ENCODE measurements at regions of chr19 and their contacts with region 1.

Region 1: GRCh38 chr19:3984908-3985642 is at the start of gene EEF2:
- DNase-seq: peak; percentile 89 to 96 (median 93)
- ATAC-seq: peak; percentile 72
- H3K4me3 ChIP-seq: peak within 1 kb of the TSS; percentile 98
- H3K4me3 Mint-ChIP-seq: peak within 1 kb of the TSS; percentile 91 to 99 (median 98)
- H3K27ac ChIP-seq: peak within 1 kb of the TSS; percentile 87
- H3K27ac Mint-ChIP-seq: peak within 1 kb of the TSS; percentile 93 to 99 (median 96)
- H3K4me1 ChIP-seq: peaks cover 37 to 43% of the 10 kb centered on the region in 2 donors
- H3K4me1 Mint-ChIP-seq: peaks cover 30 to 57% (median 48%) of the 10 kb centered on the region in 7 donors
- H3K27me3 ChIP-seq: no peaks in the 10 kb centered on the region
- H3K27me3 Mint-ChIP-seq: no peaks in the 10 kb centered on the region
- total RNA-seq, gene EEF2: 1,791 to 2,674 (median 2,346) TPM

Region 2: GRCh38 chr19:3035542-3036118 is 949.4 kb before region 1 on chr19:
- CTCF ChIA-PET with region 1: no interaction called
- POLR2A ChIA-PET with region 1: interaction called, 3 read pairs
- intact Hi-C with region 1: loop called in 1 of 2 experiments (anchors 5 kb)
- DNase-seq: peak; percentile 77 to 97 (median 95)
- ATAC-seq: peak; percentile 95
- H3K4me3 ChIP-seq: peak overlapping the region; percentile 95
- H3K4me3 Mint-ChIP-seq: peak overlapping the region; percentile 88 to 97 (median 94)
- H3K27ac ChIP-seq: peak overlapping the region; percentile 76
- H3K27ac Mint-ChIP-seq: peak overlapping the region; percentile 92 to 99 (median 98)
- H3K4me1 ChIP-seq: peaks cover 11 to 16% of the 10 kb centered on the region in 2 donors
- H3K4me1 Mint-ChIP-seq: peaks cover 21 to 44% (median 31%) of the 10 kb centered on the region in 7 donors
- H3K27me3 ChIP-seq: no peaks in the 10 kb centered on the region
- H3K27me3 Mint-ChIP-seq: peaks cover 0 to 41% (median 0%) of the 10 kb centered on the region in 5 donors

Region 3: DNA sequence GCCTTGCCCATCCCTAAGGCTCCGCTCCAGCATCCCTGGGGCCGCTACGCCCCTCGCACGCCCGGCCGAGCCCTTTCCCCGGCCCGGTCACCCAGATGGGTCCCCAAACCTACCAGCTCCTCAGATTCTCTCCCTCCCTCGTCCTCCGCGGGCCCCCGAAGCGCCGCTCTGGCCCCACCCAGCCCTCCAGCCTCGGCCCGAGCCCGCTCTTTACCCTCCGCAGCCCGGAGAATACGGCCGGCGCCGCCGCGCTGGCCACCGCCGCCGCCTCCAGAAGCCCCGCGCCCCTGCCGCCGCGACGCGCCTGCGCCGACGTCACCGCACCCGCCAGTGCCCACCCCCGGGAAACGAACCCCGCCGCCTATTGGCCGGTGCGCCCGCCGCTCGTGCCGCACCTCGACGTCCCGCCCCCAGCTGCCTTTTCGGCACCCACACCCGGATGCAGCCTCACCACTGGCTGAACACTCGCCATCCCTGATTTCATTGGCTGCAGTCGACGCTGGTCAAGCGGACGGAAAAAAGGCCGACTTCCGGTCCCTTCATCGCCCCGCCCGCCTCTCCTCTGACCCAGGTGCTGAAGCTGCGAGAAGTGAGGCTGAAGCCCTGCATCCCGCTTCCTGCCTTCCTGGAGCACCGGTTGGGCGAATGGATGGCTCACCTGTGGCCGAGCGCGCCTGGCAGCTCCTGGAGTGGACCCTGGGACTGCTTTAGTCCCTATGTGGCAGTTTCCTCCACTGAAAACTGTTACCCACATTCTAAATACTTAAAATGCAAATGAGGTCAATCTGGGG is 14.1 kb before region 1 on chr19 and contains the start of gene DAPK3:
- CTCF ChIA-PET with region 1: interaction called, 6 read pairs
- POLR2A ChIA-PET with region 1: interaction called, 44 read pairs
- intact Hi-C with region 1: loop called (anchors 1 kb)
- DNase-seq: peak; percentile 75 to 97 (median 86)
- ATAC-seq: peak; percentile 97
- H3K4me3 ChIP-seq: peak within 1 kb of the TSS; percentile 90
- H3K4me3 Mint-ChIP-seq: peak within 1 kb of the TSS; percentile 64 to 98 (median 90)
- H3K27ac ChIP-seq: peak within 1 kb of the TSS; percentile 90
- H3K27ac Mint-ChIP-seq: peak within 1 kb of the TSS; percentile 44 to 89 (median 83)
- H3K4me1 ChIP-seq: peaks cover 13 to 16% of the 10 kb centered on the region in 2 donors
- H3K4me1 Mint-ChIP-seq: peaks cover 13 to 34% (median 29%) of the 10 kb centered on the region in 7 donors
- H3K27me3 ChIP-seq: no peaks in the 10 kb centered on the region
- H3K27me3 Mint-ChIP-seq: no peaks in the 10 kb centered on the region
- total RNA-seq, gene DAPK3: 24.7 to 40.3 (median 33.9) TPM

Region 4: DNA sequence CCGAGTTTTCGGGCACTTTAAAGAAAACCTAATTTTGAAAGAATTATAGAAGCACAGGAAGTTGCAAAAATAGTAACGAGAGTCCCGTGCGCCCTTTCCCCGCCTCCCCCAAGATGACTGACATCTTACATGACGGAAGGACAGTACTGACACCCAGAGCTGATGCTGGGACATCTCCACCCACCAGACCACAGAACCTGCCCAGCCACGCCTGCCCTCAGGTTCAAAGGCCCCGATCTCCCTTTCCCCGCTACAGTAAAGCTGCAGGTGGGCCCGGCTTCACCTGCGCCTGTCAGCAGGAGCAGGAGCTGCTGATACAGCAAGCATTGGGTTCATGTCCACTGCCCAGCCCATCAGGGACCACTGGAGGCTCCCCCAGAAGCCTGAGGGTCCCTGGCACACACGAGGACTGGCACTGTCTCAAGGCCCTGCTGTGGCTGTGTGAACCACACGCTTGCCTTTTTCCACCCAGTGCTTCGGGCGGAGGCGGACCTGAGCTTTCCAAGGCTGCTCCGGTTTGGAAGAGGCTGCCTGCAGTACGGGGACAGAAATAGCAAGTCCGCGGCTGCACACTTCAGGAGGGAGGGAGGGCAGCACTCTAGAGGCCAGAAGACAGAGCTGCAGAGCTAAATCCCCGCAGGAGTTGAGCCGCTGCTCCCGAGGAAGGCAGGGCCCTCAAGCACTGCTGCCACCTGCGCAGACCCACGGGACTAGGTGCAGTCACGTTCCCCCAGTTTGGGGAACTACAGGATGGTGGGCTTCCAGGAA is 130.2 kb after region 1 on chr19:
- CTCF ChIA-PET with region 1: interaction called, 4 read pairs
- POLR2A ChIA-PET with region 1: interaction called, 3 read pairs
- intact Hi-C with region 1: loop called in 1 of 2 experiments (anchors 2 kb)
- DNase-seq: peak in 8 of 9 donors; percentile 46 to 78 (median 66)
- ATAC-seq: peak; percentile 99
- H3K4me3 ChIP-seq: no peak overlapping the region
- H3K4me3 Mint-ChIP-seq: peak overlapping the region; percentile 52 to 81 (median 72)
- H3K27ac ChIP-seq: peak overlapping the region; percentile 57
- H3K27ac Mint-ChIP-seq: peak overlapping the region; percentile 64 to 93 (median 83)
- H3K4me1 ChIP-seq: peaks cover 17 to 24% of the 10 kb centered on the region in 2 donors
- H3K4me1 Mint-ChIP-seq: peaks cover 14 to 60% (median 33%) of the 10 kb centered on the region in 7 donors
- H3K27me3 ChIP-seq: no peaks in the 10 kb centered on the region
- H3K27me3 Mint-ChIP-seq: no peaks in the 10 kb centered on the region

Region 5: GRCh38 chr19:4182084-4182810 is 197.2 kb after region 1 on chr19 and contains the starts of genes ANKRD24 and SIRT6:
- CTCF ChIA-PET with region 1: interaction called, 3 read pairs
- POLR2A ChIA-PET with region 1: no interaction called
- intact Hi-C with region 1: loop called (anchors 1 to 2 kb)
- DNase-seq: peak; percentile 91 to 97 (median 96)
- ATAC-seq: peak; percentile 90
- H3K4me3 ChIP-seq: peak within 1 kb of the TSS; percentile 90
- H3K4me3 Mint-ChIP-seq: peak within 1 kb of the TSS; percentile 92 to 99 (median 96)
- H3K27ac ChIP-seq: peak within 1 kb of the TSS; percentile 86
- H3K27ac Mint-ChIP-seq: peak within 1 kb of the TSS; percentile 92 to 98 (median 95)
- H3K4me1 ChIP-seq: peaks cover 14 to 15% of the 10 kb centered on the region in 2 donors
- H3K4me1 Mint-ChIP-seq: peaks cover 25 to 44% (median 39%) of the 10 kb centered on the region in 7 donors
- H3K27me3 ChIP-seq: no peaks in the 10 kb centered on the region
- H3K27me3 Mint-ChIP-seq: peaks cover 0 to 2% (median 0%) of the 10 kb centered on the region in 5 donors
- total RNA-seq, gene ANKRD24: 0.75 to 2.8 (median 2.4) TPM
- total RNA-seq, gene SIRT6: 20.0 to 41.2 (median 26.0) TPM

Region 6: DNA sequence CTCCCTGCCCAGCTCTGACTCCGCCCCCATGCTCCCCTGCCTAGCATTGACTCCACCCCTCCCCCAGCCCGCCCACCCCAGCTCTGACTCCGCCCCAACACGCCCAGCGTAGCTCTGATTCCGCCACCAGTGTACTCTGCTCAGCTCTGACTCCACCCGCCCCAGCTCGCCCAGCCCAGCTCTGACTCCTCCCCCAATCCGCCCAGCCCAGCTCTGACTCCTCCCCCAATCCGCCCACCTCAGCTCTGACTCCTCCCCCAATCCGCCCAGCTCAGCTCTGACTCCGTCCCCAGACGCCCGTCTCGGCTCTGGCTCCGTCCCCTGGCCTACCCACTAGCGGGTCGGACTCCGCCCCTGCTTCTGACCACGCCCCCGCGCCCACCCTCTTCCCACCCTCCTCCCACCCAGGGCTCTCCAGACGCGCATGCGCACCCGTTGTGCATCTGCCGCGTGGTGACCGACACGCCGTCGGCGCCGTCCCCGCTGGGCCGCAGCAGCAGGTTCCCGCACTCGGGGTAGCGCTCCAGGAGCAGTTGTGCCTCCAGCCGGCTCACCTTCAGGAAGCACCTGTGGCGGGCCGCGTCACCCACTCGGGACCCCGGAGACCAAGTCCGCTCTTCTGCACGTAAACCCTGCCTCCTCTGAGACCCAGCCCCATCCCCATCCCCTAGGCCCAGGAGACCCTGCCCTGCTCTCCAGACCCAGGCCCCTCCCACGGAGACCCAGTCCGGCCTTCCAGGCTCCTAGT is 343.3 kb after region 1 on chr19:
- CTCF ChIA-PET with region 1: no interaction called
- POLR2A ChIA-PET with region 1: no interaction called
- intact Hi-C with region 1: loop called in 1 of 2 experiments (anchors 1 kb)
- DNase-seq: peak; percentile 87 to 96 (median 93)
- ATAC-seq: peak; percentile 93
- H3K4me3 ChIP-seq: peak overlapping the region; percentile 65
- H3K4me3 Mint-ChIP-seq: peak overlapping the region; percentile 83 to 90 (median 87)
- H3K27ac ChIP-seq: peak overlapping the region; percentile 52
- H3K27ac Mint-ChIP-seq: peak overlapping the region; percentile 72 to 98 (median 91)
- H3K4me1 ChIP-seq: peaks cover 11 to 14% of the 10 kb centered on the region in 2 donors
- H3K4me1 Mint-ChIP-seq: peaks cover 8 to 28% (median 24%) of the 10 kb centered on the region in 7 donors
- H3K27me3 ChIP-seq: no peaks in the 10 kb centered on the region
- H3K27me3 Mint-ChIP-seq: peaks cover 0 to 4% (median 0%) of the 10 kb centered on the region in 5 donors

Measured in naive thymus-derived CD4-positive, alpha-beta T cell (primary cell).